Heart right ventricle (tissue), 16 donors: ENCODE measurements at regions of chr2 and their contacts with region 1.

Region 1: GRCh38 chr2:228180181-228181097 is 1.0 kb downstream of the SPHKAP start:
- DNase-seq: peak; percentile 39 to 41
- ATAC-seq: peak; percentile 49 to 81 (median 70)
- H3K4me3 ChIP-seq: peak overlapping the region; percentile 47 to 66 (median 55)
- H3K27ac ChIP-seq: peak overlapping the region; percentile 36 to 87 (median 80)
- H3K4me1 ChIP-seq: peaks cover 0 to under 1% (median 0%) of the 10 kb centered on the region in 9 donors
- H3K27me3 ChIP-seq: peaks cover 0 to 33% (median 11%) of the 10 kb centered on the region in 7 donors
- CTCF ChIP-seq: peak in 3 of 9 donors; percentile 22 to 23 (median 22)

Region 2: GRCh38 chr2:228048838-228049490 is 131.5 kb before region 1 on chr2:
- intact Hi-C with region 1: loop called in 2 of 10 experiments (anchors 10 kb)
- DNase-seq: peak in 1 of 2 donors; percentile 7
- ATAC-seq: peak; percentile 63 to 89 (median 82)
- H3K4me3 ChIP-seq: no peak overlapping the region
- H3K27ac ChIP-seq: peak overlapping the region in 1 of 10 donors; percentile 12
- H3K4me1 ChIP-seq: peaks cover 0 to 6% (median 0%) of the 10 kb centered on the region in 9 donors
- H3K27me3 ChIP-seq: no peaks in the 10 kb centered on the region
- CTCF ChIP-seq: peak; percentile 21 to 68 (median 47)

Region 3: GRCh38 chr2:228318218-228318617 is 137.8 kb after region 1 on chr2:
- intact Hi-C with region 1: loop called in 2 of 10 experiments (anchors 10 kb)
- DNase-seq: peak; percentile 14 to 38
- ATAC-seq: peak in 7 of 8 donors; percentile 61 to 82 (median 77)
- H3K4me3 ChIP-seq: no peak overlapping the region
- H3K27ac ChIP-seq: no peak overlapping the region
- H3K4me1 ChIP-seq: peaks cover 0 to 19% (median 13%) of the 10 kb centered on the region in 9 donors
- H3K27me3 ChIP-seq: no peaks in the 10 kb centered on the region
- CTCF ChIP-seq: peak in 7 of 9 donors; percentile 42 to 60 (median 53)

Region 4: DNA sequence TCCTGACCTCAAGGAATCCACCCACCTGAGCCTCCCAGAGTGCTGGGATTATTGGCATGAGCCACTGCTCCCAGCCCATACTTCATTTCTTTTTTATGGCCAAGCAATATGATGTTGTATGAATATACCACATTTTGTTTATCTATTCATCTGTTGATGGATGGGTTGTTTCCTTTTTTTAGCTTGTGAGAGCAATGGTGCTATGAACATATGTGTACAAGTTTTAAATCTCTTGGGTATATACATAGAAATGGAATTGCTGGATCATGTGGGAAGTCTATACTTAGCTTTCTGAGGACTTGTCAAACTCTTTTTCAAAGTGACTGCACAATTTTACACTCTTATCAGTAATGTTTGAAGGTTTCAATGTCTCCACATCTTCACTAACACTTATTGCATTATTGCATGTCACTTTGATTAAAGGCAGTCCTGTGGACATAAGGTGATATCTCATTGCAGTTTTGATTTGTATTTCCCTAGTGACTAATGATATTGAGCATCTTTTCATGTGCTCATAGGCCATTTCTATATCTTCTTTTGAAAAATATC is 168.2 kb after region 1 on chr2:
- intact Hi-C with region 1: loop called in 2 of 10 experiments (anchors 10 kb)
- DNase-seq: no peak
- ATAC-seq: peak; percentile 67 to 97 (median 94)
- H3K4me3 ChIP-seq: no peak overlapping the region
- H3K27ac ChIP-seq: peak overlapping the region in 8 of 10 donors; percentile 7 to 77 (median 55)
- H3K4me1 ChIP-seq: peaks cover 0 to 11% (median 0%) of the 10 kb centered on the region in 9 donors
- H3K27me3 ChIP-seq: no peaks in the 10 kb centered on the region
- CTCF ChIP-seq: no peak

Region 5: GRCh38 chr2:228652366-228652765 is 471.9 kb after region 1 on chr2:
- intact Hi-C with region 1: loop called in 7 of 10 experiments (anchors 2 to 10 kb)
- DNase-seq: no peak
- ATAC-seq: no peak
- H3K4me3 ChIP-seq: no peak overlapping the region
- H3K27ac ChIP-seq: no peak overlapping the region
- H3K4me1 ChIP-seq: peaks cover 0 to 12% (median 0%) of the 10 kb centered on the region in 9 donors
- H3K27me3 ChIP-seq: no peaks in the 10 kb centered on the region
- CTCF ChIP-seq: no peak